ENCODE measurements at regions of chr13 and their contacts with region 1.

Region 1: DNA sequence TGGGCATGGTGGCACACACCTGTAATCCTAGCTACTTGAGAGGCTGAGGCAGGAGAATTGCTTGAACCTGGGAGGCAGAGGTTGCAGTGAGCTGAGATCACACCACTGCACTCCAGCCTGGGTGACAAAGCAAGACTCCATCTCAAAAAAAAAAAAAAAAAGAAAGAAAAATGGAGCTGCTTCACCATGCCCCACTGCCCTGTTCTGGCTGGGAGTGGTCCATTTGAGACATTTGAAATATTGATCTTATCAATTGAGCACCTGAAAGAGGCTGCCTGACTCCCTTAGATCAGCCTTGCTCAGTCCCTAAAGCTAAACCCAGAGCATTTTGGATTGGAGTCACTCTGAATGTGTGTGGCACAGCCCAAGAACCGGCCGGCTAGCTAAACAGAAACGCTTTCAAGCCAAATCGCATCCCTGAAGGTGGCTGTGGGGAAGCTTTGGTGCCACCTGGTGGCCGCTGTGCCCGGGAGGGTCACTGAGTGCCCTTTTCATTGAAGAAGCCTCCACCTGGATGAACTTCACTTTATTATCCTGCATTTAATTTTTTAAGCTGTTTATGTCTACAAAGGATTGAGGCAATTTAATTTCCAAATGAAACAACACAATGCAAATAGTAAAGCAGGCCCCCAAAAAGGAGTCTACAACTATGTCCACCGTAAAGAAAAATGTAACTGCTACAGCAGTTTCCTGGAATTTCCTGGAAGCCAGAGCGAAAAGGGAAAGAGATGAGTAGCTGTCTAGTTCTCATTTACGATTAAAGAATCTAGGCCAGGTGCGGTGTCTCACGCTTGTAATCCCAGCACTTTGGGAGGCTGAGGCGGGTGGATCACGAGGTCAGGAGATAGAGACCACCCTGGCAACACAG is 53.1 kb upstream of the SERPINE3 start:
- DNase-seq: peak; percentile 44 to 66 (median 56)
- ATAC-seq: peak; percentile 91
- H3K4me3 ChIP-seq: no peak overlapping the region
- H3K27ac ChIP-seq: no peak overlapping the region
- H3K4me1 ChIP-seq: no peaks in the 10 kb centered on the region
- H3K27me3 ChIP-seq: peaks cover 0 to 16% of the 10 kb centered on the region in 2 experiments; a peak in 2 of 5 replicates
- CTCF ChIP-seq: peak; percentile 74 to 83 (median 77)
- EP300 ChIP-seq: no peak
- POLR2A ChIP-seq: no peak
- RAD21 ChIP-seq: peak; percentile 62 to 72

Region 2: DNA sequence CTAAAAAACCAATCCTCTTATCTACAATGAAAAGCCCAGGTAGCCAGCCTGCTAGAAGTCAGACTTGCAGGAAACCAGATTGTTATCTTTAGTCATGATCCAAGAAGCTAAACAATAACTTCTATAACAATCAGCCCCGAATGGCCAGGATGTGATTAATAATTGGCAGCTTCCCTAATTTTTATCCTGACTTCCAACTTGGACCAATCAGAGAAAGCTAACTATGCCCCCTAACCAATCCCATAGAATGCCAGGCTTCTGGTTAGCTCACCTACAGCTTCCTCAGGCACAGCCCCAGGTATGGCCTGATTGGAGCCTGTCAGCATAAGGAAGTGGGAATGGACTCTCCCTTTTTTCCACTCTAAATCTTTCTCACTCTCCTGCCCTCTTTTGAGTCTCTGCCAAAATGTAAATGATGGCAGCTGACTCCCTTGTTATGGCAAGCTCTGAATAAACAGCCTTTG is 837.8 kb before region 1 on chr13:
- CTCF ChIA-PET with region 1: no interaction called
- POLR2A ChIA-PET with region 1: no interaction called
- in situ Hi-C with region 1: no loop called
- intact Hi-C with region 1: no loop called
- DNase-seq: no peak
- ATAC-seq: no peak
- H3K4me3 ChIP-seq: no peak overlapping the region
- H3K27ac ChIP-seq: no peak overlapping the region
- H3K4me1 ChIP-seq: no peaks in the 10 kb centered on the region; a peak in 2 of 5 replicates
- H3K27me3 ChIP-seq: no peaks in the 10 kb centered on the region
- CTCF ChIP-seq: no peak
- EP300 ChIP-seq: no peak
- POLR2A ChIP-seq: no peak
- RAD21 ChIP-seq: no peak

Region 3: DNA sequence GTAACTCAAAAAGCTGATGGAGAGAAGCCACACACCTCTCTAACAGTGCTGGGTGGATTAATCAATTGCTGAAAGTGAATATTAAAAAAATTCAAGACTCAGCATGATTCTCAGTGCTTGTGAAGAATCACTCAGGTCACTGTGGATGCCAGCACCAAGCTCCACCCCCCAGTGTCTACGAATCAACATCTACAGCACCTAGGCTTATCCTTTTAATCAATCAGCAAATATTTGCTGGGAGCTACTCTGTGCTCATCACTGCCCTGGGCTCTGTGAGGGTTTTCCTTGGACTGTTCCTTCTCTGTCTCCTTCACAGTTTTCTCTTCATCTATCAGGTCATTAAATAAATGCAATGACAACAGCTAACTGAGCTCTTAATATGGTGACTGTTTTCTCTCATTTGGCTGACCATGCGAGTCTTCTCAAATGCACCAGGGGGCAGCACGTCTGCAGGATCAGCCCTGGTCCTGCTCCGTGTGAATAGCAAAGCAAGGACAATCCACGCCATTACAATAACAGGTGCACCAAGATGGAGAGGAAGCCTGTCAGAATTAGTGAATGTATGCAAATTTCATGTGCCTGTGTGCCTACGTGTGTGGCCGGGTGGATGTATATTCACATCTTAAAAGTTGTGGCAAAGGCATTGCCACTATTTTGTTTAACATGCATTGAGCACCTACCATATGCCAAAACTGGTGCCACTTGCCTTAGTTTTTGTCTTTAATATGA is 160.7 kb before region 1 on chr13:
- CTCF ChIA-PET with region 1: interaction called, 10 read pairs
- POLR2A ChIA-PET with region 1: interaction called, 3 read pairs
- in situ Hi-C with region 1: loop called (anchors 10 kb)
- intact Hi-C with region 1: loop called (anchors 1 kb)
- DNase-seq: peak; percentile 23 to 55 (median 34)
- ATAC-seq: peak; percentile 91
- H3K4me3 ChIP-seq: no peak overlapping the region
- H3K27ac ChIP-seq: no peak overlapping the region
- H3K4me1 ChIP-seq: no peaks in the 10 kb centered on the region
- H3K27me3 ChIP-seq: no peaks in the 10 kb centered on the region
- CTCF ChIP-seq: peak; percentile 70 to 73 (median 71)
- EP300 ChIP-seq: no peak
- POLR2A ChIP-seq: no peak
- RAD21 ChIP-seq: peak; percentile 67 to 81

Region 4: GRCh38 chr13:51134763-51135365 is 151.5 kb before region 1 on chr13:
- CTCF ChIA-PET with region 1: no interaction called
- POLR2A ChIA-PET with region 1: no interaction called
- in situ Hi-C with region 1: loop called (anchors 10 kb)
- intact Hi-C with region 1: no loop called
- DNase-seq: no peak
- ATAC-seq: no peak
- H3K4me3 ChIP-seq: no peak overlapping the region
- H3K27ac ChIP-seq: no peak overlapping the region
- H3K4me1 ChIP-seq: no peaks in the 10 kb centered on the region
- H3K27me3 ChIP-seq: peaks cover 0 to 10% of the 10 kb centered on the region in 2 experiments; a peak in 1 of 5 replicates
- CTCF ChIP-seq: no peak
- EP300 ChIP-seq: no peak
- POLR2A ChIP-seq: no peak
- RAD21 ChIP-seq: no peak

Region 5: GRCh38 chr13:51148952-51149573 is 137.3 kb before region 1 on chr13:
- CTCF ChIA-PET with region 1: no interaction called
- POLR2A ChIA-PET with region 1: no interaction called
- in situ Hi-C with region 1: no loop called
- intact Hi-C with region 1: loop called (anchors 2 kb)
- DNase-seq: peak in 1 of 4 experiments; percentile 9
- ATAC-seq: peak; percentile 42; the same call in 1 of the 3 replicates
- H3K4me3 ChIP-seq: no peak overlapping the region
- H3K27ac ChIP-seq: no peak overlapping the region
- H3K4me1 ChIP-seq: no peaks in the 10 kb centered on the region; a peak in 1 of 5 replicates
- H3K27me3 ChIP-seq: peaks cover 4 to 18% of the 10 kb centered on the region in 2 experiments; a peak in 4 of 5 replicates
- CTCF ChIP-seq: peak in 2 of 3 experiments; percentile 16 to 56; a peak in 4 of 6 replicates
- EP300 ChIP-seq: no peak
- POLR2A ChIP-seq: no peak
- RAD21 ChIP-seq: peak; percentile 54 to 55

Region 6: GRCh38 chr13:51452361-51453206 is 166.2 kb after region 1 on chr13 and contains the start of gene INTS6:
- CTCF ChIA-PET with region 1: no interaction called
- POLR2A ChIA-PET with region 1: no interaction called
- in situ Hi-C with region 1: no loop called
- intact Hi-C with region 1: no loop called
- DNase-seq: peak in 2 of 4 experiments; percentile 92 to 97
- ATAC-seq: peak; percentile 86
- H3K4me3 ChIP-seq: peak within 1 kb of the TSS; percentile 88
- H3K27ac ChIP-seq: peak within 1 kb of the TSS; percentile 96
- H3K4me1 ChIP-seq: peaks cover 4 to 12% of the 10 kb centered on the region in 2 experiments; a peak in 3 of 5 replicates
- H3K27me3 ChIP-seq: no peaks in the 10 kb centered on the region
- CTCF ChIP-seq: no peak
- EP300 ChIP-seq: no peak
- POLR2A ChIP-seq: peak; percentile 99
- RAD21 ChIP-seq: no peak
- polyA plus RNA-seq, gene INTS6: 3.7 to 4.3 TPM